Activated CD4-positive, alpha-beta T cell treated with anti-CD3 and anti-CD28 coated beads, Interleukin-2, amount 10 ng/mL, durations not matched to agents 24 days and 14 days (primary cell): ENCODE measurements at regions of chr14 and their contacts with region 1.

Region 1: DNA sequence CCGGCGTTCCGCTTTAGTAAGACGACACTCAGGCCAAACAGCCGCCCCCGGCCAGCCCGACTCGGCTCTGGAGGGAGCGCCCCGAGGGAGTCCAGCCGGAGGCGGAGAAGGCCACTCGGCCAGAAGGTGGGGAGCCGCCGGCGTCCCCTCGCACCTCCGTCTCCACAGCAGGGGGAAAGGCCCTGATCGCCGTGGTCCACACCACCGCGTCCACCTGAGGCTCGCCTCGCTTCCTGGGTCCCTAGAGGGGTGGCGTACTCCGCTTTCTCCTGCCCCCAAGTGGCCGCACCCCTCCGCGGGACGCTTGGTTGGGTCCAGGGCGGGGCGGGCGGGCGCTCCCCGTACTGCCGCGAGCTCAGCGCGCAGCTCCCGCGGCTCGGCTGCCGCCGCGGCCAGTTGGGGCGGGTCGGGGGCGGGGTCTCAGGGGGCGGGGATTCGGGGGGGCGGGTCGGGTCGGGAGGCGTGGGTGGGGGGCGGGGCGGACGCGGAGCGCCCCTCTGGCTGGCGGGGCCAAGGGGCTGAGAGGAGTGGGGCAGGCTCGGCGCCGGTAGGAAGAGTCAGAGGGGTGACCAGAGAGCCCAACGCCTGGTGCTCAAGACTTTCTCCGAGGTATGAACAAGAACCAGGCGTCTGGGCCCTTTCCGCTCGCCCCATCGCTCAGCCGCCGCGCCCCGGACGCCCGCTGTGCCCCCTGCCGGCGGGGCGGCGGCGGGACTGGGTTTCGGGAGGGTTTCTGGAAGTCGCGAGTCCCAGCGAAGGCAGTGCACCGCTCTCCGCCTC is at the start of gene FRMD6:
- DNase-seq: peak; percentile 94
- H3K4me3 Mint-ChIP-seq: peak within 1 kb of the TSS; percentile 88
- H3K27ac Mint-ChIP-seq: peak within 1 kb of the TSS; percentile 78
- H3K4me1 Mint-ChIP-seq: peaks cover 19% of the 10 kb centered on the region
- H3K27me3 Mint-ChIP-seq: peaks cover 17% of the 10 kb centered on the region
- total RNA-seq, gene FRMD6: 5.5 and 7.4 TPM in 2 replicates

Region 2: DNA sequence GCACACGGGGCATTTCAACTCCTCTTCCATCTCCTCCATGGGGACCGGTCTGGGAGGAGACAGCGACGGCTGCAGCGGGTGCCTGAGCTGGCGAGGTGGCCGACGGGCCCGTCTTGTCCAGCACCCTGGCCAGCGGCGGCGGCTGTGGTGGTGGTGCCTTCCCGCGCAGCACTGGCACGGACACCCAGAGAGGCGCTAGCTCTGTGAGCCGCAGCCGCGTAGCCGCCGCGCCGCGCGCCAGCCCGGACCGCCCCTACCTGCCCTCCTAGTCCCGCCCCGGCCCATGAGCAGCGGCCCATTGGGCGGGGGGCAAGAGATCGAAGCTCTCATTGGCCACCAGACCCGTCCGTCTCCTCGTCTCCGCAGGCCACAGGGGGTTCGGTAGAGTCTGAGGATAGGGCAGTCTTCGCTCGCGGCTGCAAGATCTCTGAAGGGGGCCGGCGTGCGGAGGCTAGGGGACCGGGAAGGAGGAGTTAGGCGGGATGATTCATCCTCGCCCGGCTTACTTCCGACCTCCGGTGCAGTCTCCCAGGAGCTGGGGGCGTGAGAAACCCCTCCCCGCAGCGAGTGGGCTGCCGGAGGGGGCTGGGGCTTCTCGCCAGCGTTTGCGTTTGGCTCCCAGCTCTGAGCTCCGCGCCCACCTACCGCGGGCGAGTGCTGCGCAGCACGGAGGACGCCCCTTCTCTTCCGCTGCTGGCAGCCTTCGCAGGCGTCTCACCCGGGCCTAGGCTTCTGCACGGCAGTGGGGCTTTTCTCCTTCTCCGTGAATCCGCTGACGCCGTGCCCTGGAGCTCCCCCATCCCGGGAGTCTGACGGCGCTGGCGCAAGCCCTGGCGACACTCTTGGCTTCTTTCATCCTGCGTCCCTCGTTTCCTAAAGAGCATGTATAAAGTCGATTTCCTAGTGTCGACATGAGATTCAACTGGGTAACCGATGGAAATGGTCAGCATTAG is 556.4 kb before region 1 on chr14 and contains the start of gene TRIM9:
- intact Hi-C with region 1: loop called (anchors 5 kb)
- DNase-seq: peak; percentile 97
- H3K4me3 Mint-ChIP-seq: peak within 1 kb of the TSS; percentile 91
- H3K27ac Mint-ChIP-seq: peak within 1 kb of the TSS; percentile 51
- H3K4me1 Mint-ChIP-seq: peaks cover 15% of the 10 kb centered on the region
- H3K27me3 Mint-ChIP-seq: peaks cover 55% of the 10 kb centered on the region
- total RNA-seq, gene TRIM9: 0.47 and 0.52 TPM in 2 replicates

Region 3: GRCh38 chr14:51283402-51284085 is 368.0 kb before region 1 on chr14:
- intact Hi-C with region 1: loop called (anchors 5 kb)
- DNase-seq: no peak
- H3K4me3 Mint-ChIP-seq: no peak overlapping the region
- H3K27ac Mint-ChIP-seq: no peak overlapping the region
- H3K4me1 Mint-ChIP-seq: no peaks in the 10 kb centered on the region
- H3K27me3 Mint-ChIP-seq: no peaks in the 10 kb centered on the region

Region 4: DNA sequence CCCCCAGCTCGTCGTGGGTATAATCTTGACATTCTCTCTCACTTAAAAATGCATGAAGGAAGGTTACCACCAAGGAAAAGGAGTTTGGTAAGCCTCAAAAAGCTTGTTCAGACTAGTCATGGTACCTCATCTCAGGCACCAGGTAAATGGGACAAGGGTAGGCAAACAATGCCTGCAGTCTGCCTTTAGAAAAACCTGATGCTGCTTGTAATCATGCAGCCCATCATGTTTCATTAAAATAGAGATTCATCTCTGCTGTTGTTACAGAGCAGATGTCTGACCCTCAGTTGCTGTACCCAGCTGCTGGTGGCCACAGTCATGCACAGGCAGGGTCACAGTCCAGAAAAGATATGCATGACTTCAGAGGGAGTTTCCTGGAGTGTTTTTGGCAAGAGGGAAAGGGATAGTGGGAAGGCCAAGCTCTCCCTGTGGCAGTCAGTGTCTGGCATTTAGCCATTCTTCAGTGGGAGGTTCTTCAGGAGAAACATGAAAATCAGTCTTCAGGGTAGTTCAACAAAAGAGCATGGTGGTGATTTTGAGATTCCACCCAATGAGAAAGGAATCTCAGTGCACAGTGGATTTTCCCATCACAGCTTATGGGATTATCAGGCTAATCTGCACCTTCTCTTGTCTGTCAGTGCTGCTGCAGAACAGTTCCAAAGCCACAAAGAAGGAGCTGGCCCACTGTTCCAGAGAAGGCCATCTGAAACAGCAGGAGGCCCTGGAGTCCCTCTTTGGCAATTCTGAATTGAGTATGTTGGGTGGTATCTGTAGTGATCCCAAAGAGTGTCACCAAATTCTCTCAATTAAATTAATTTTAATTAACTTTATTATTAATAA is 202.5 kb before region 1 on chr14:
- intact Hi-C with region 1: no loop called
- DNase-seq: no peak
- H3K4me3 Mint-ChIP-seq: no peak overlapping the region
- H3K27ac Mint-ChIP-seq: no peak overlapping the region
- H3K4me1 Mint-ChIP-seq: no peaks in the 10 kb centered on the region
- H3K27me3 Mint-ChIP-seq: no peaks in the 10 kb centered on the region

Region 5: DNA sequence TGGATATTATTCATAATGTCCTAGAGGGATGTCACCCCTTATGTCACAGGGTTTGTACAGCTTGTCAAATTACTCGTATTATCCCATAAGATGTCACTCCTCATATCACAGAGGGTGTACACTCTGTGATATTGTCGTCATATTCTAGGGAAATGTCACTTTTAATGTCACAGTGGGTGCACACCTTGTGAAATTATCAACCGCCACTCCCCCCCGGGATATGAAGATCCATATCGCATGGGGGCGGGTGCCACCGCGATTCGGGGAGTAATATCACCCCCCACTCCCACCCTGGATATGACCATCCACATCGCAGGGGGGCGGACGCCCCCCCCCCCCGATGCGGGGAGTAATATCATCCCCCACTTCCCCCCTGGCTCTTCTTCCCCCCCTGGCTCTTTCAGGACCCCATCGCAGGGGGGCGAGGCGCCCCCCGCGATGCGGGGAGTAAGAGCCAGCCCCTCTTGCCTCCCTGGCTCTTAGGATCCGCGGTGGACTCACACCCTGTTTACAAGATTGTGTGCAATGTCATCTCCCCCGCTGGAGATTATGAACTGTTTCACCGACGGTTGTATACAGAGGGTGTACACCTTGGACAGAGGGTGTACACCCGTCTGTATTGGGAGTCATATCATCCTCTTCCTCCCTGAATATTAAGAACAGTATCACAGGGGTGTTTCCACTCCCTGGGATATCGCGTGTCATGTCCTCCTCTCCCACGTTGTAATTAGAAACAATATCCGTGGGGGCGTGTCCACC is 93.0 kb after region 1 on chr14:
- intact Hi-C with region 1: loop called (anchors 5 kb)
- DNase-seq: peak; percentile 79
- H3K4me3 Mint-ChIP-seq: no peak overlapping the region
- H3K27ac Mint-ChIP-seq: peak overlapping the region; percentile 48
- H3K4me1 Mint-ChIP-seq: no peaks in the 10 kb centered on the region
- H3K27me3 Mint-ChIP-seq: no peaks in the 10 kb centered on the region

Region 6: GRCh38 chr14:51860164-51860824 is 208.7 kb after region 1 on chr14 and contains the start of gene GNG2:
- intact Hi-C with region 1: loop called (anchors 5 kb)
- DNase-seq: peak; percentile 95
- H3K4me3 Mint-ChIP-seq: peak within 1 kb of the TSS; percentile 99
- H3K27ac Mint-ChIP-seq: peak within 1 kb of the TSS; percentile 92
- H3K4me1 Mint-ChIP-seq: peaks cover 51% of the 10 kb centered on the region
- H3K27me3 Mint-ChIP-seq: no peaks in the 10 kb centered on the region
- total RNA-seq, gene GNG2: 104 and 105 TPM in 2 replicates